ENCODE measurements at regions of chr5 and their contacts with region 1.

Region 1: DNA sequence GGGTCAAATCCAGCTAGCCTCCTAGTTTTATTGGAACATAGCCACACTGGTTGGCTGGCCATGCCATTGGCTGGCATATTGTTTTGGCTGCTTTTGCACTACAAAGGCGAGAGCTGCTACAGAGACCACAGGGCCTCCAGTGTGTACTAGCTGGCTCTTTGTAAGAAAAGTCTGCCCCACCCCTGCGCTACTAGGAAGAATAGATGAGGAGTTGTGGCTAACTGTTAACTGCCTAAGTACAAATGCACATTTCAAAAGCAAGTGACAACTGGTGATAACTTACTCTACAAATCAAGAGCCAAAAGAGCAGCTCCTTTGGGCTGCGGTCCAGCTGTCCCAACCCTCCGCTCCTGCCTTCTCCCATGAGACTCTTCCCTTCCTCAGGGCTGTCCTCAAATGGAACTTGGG is 63.9 kb downstream of the SERINC5 start:
- DNase-seq: peak; percentile 81
- H3K4me3 Mint-ChIP-seq: peak overlapping the region; percentile 58
- H3K27ac Mint-ChIP-seq: peak overlapping the region; percentile 100
- H3K4me1 Mint-ChIP-seq: peaks cover 88% of the 10 kb centered on the region
- H3K27me3 Mint-ChIP-seq: no peaks in the 10 kb centered on the region

Region 2: GRCh38 chr5:80069918-80070318 is 122.1 kb before region 1 on chr5:
- CTCF ChIA-PET with region 1: no interaction called
- DNase-seq: no peak
- H3K4me3 Mint-ChIP-seq: no peak overlapping the region
- H3K27ac Mint-ChIP-seq: no peak overlapping the region
- H3K4me1 Mint-ChIP-seq: peaks cover 5% of the 10 kb centered on the region
- H3K27me3 Mint-ChIP-seq: no peaks in the 10 kb centered on the region

Region 3: DNA sequence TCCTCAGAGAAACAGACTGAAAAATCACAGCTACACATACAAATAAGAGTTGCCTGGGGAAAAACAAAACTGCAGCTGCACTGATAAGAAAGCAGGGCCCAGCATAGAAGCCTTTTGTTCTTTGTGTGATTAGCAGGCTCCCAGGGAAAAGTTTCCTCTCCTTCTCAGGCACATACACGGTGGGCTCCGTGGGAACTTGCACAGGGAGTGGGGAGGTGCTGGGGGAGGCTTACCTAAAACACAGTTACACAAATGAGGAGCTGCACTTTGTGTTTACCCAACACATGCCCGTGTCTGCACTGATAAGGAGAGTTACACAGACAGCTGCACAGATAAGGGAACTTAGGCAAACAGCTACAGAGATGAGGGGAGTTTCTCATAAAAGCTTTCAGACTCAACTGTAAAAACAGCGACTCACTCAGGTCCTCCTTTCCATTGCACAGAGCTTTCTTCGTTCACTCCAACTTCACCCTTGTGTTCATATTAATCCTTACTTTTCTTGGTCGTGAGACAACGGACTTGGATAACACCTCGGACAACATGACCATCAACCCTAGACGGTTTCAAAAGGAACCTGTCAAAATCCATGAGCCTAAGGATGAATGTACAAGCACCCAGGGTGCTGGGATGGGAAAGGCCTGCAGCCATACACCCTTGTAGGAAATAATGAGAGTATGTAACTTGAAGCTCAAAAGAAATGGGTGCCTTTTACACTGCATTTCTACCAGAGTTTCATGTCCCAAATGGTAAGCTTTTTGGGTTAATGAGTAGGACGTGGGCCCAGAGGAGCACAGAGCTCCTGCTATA is 13.0 kb after region 1 on chr5:
- CTCF ChIA-PET with region 1: interaction called, 23 read pairs
- DNase-seq: no peak
- H3K4me3 Mint-ChIP-seq: no peak overlapping the region
- H3K27ac Mint-ChIP-seq: peak overlapping the region; percentile 84
- H3K4me1 Mint-ChIP-seq: peaks cover 74% of the 10 kb centered on the region
- H3K27me3 Mint-ChIP-seq: no peaks in the 10 kb centered on the region

Region 4: DNA sequence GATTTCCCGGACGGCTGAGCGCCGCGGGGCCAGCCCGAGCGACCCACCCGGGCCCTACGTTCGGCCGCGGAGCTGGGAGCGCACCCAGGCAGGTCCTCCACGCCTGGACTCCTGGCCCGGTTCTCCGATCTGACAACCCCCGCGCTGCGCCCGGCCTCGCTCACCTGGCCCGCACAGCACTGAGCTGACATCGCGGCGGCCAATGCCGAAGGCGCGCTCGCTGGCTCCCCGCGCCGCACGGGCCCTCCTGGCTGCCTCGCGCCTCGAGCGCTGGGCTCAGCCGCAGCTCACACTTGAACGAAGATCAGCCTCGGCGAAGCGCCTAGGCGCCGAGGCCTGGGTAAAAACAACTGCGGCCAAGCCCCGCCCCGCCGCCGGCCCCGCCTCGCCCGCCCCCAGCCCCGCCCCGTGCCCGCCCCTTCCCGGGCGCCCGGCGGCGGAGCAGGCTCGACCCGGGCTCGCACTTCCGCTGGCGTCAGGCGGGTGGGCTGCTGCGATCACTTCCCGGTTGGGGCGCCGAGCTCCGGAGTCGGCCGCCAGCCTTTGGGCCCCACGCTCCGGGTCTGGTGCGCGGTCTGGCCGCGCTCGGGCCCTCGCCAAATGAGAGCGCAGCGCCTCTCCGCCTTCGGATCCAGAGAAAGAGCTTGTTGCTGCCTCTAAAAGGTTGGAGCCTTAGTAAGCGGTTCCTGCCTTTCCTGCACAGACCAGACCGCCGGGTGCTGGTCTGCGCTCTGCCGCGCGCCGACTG is 63.9 kb after region 1 on chr5 and contains the start of gene SERINC5:
- CTCF ChIA-PET with region 1: interaction called, 18 read pairs
- DNase-seq: peak; percentile 90
- H3K4me3 Mint-ChIP-seq: peak within 1 kb of the TSS; percentile 92
- H3K27ac Mint-ChIP-seq: peak within 1 kb of the TSS; percentile 97
- H3K4me1 Mint-ChIP-seq: peaks cover 48% of the 10 kb centered on the region
- H3K27me3 Mint-ChIP-seq: peaks cover 3% of the 10 kb centered on the region